Natural killer cell (primary cell): ENCODE measurements at regions of chr11 and their contacts with region 1.

Region 1: DNA sequence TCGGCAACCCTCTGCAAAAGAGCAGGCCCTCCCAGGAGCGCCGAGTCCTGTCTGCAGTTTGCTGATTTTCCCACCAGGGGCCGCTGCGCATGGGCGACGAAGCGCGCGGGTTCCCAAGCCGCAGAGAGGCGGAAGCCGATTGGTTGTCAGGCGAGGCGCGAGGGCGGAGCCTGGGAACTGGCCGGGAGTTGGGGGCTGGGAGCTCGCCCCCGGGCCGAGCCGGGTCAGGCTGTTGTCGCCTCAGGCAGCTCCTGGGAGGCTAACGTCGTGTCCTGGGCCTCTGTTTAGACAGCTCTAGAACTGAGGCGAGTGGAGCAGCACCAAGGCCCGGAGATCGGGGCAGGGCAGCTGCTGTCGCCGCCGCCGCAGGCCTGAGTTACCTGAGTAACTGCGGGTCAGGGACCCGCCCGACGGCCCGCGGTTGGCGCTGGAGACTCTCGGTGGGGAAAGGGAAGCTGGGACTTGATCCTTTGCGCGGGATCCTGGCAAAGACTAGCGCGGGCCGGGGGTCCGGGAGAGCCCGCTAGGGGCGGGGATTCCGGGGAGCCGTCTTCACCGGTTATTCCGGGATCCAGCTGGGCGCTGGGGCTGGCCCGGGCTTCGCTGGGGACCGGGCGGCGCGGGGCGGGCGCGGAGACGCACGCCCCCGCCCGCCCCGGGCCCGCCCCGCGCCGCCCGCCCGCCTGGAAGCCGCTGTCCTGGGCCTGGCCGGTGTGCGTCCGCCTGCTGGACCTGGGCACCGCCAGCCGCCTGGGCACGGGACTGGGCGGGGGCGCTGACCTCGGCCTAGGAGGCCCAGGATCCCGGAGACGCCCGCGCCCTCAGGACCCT is at the start of gene STIM1:
- DNase-seq: peak; percentile 98
- ATAC-seq: peak; percentile 77 to 92 (median 84)
- H3K4me3 ChIP-seq: peak within 1 kb of the TSS; percentile 96
- H3K4me3 Mint-ChIP-seq: peak within 1 kb of the TSS; percentile 96
- H3K27ac ChIP-seq: peak within 1 kb of the TSS; percentile 86
- H3K27ac Mint-ChIP-seq: peak within 1 kb of the TSS; percentile 83 to 100
- H3K4me1 ChIP-seq: peaks cover 49% of the 10 kb centered on the region
- H3K4me1 Mint-ChIP-seq: peaks cover 67 to 69% of the 10 kb centered on the region in 2 donors
- H3K27me3 ChIP-seq: no peaks in the 10 kb centered on the region
- H3K27me3 Mint-ChIP-seq: no peaks in the 10 kb centered on the region
- CTCF ChIP-seq: peak; percentile 94
- total RNA-seq, gene STIM1: 171 to 187 (median 175) TPM

Region 2: DNA sequence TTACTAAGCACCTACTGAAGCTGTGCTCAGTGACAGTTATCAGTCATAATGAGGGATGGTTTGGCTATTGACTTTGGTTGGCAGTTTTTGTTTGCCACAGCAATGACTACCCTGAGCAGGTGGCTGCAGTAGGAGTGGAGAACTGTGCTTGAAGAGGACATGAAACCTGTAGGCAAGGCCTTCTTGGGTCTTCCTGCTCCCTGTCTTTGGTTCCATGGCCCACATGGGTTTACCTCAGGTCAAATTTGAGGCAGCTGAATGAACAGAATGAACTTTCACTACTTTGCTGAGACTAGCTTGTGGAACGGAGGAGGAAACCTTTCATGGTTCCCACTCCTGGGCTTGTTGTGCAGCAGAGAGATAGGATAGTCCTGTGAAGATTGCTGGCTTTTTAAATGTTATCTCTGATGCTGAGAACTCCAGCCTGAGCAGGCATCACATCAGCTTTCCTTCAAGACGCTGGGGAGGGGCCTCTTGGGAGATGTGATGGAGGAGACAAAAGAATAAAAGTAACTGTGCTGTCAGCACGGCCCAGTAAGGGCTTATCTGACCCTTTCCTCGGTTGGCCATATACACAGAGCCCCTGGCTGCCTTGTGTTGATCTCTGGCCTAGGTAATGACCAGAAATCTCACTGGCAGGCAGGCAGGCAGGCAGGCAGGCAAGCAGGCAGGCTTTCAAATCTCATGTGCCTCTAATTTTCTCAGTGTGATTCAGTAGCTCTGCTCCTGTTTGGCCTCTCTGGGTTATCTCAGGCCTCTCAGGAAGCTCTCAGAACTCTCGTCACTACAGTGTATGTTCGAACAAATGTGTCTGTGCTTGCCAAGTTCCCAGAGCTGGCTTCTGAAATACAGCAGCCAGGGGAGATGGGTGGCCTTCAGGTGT is 12.3 kb after region 1 on chr11:
- intact Hi-C with region 1: loop called (anchors 1 kb)
- DNase-seq: peak in 1 of 2 donors; percentile 34
- ATAC-seq: no peak
- H3K4me3 ChIP-seq: no peak overlapping the region
- H3K4me3 Mint-ChIP-seq: peak overlapping the region; percentile 41
- H3K27ac ChIP-seq: peak overlapping the region; percentile 70
- H3K27ac Mint-ChIP-seq: peak overlapping the region; percentile 83 to 88
- H3K4me1 ChIP-seq: peaks cover 55% of the 10 kb centered on the region
- H3K4me1 Mint-ChIP-seq: peaks cover 79 to 82% of the 10 kb centered on the region in 2 donors
- H3K27me3 ChIP-seq: no peaks in the 10 kb centered on the region
- H3K27me3 Mint-ChIP-seq: no peaks in the 10 kb centered on the region
- CTCF ChIP-seq: no peak

Region 3: DNA sequence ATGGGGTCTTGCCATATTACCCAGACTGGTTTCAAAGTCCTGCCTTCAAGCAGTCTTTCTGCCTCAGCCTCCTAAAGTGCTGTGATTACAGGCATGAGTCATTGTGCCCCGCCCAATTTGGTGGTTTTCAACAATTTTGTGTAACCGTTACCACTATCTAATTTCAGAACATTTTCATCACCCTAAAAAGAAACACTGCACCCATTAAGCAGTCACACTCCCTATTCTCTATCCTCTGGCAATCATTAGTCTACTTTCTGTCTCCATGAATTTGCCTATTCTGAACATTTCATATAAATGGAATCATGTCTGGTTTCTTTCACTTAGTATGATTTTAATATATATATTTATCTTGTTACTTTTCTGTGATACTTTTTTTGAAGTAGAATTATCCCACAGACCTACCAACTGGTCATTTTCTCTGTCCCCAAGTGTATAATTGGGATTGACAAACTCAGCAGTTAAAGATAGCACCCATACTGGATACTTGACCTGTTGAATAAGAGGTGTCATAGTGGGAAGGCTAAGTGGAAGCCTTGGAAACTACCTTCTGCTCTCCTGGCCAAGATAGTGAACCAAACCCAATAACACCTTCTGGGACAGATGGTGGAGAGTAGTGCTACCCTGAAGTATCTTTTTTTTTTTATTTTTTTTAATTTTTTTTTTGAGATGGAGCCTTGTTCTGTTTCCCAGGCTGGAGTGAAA is 65.1 kb after region 1 on chr11:
- intact Hi-C with region 1: loop called (anchors 2 kb)
- DNase-seq: peak; percentile 57 to 76
- ATAC-seq: peak; percentile 78 to 79 (median 78)
- H3K4me3 ChIP-seq: no peak overlapping the region
- H3K4me3 Mint-ChIP-seq: peak overlapping the region; percentile 36
- H3K27ac ChIP-seq: peak overlapping the region; percentile 65
- H3K27ac Mint-ChIP-seq: peak overlapping the region; percentile 61 to 81
- H3K4me1 ChIP-seq: peaks cover 47% of the 10 kb centered on the region
- H3K4me1 Mint-ChIP-seq: peaks cover 57% of the 10 kb centered on the region in 2 donors
- H3K27me3 ChIP-seq: no peaks in the 10 kb centered on the region
- H3K27me3 Mint-ChIP-seq: no peaks in the 10 kb centered on the region
- CTCF ChIP-seq: no peak

Region 4: GRCh38 chr11:3994030-3994640 is 138.9 kb after region 1 on chr11:
- intact Hi-C with region 1: loop called (anchors 5 kb)
- DNase-seq: peak in 1 of 2 donors; percentile 23
- ATAC-seq: peak in 1 of 3 donors; percentile 49
- H3K4me3 ChIP-seq: no peak overlapping the region
- H3K4me3 Mint-ChIP-seq: no peak overlapping the region
- H3K27ac ChIP-seq: no peak overlapping the region
- H3K27ac Mint-ChIP-seq: no peak overlapping the region
- H3K4me1 ChIP-seq: peaks cover 15% of the 10 kb centered on the region
- H3K4me1 Mint-ChIP-seq: peaks cover 76 to 78% of the 10 kb centered on the region in 2 donors
- H3K27me3 ChIP-seq: no peaks in the 10 kb centered on the region
- H3K27me3 Mint-ChIP-seq: no peaks in the 10 kb centered on the region
- CTCF ChIP-seq: no peak

Region 5: GRCh38 chr11:4164884-4165590 is 309.8 kb after region 1 on chr11:
- intact Hi-C with region 1: no loop called
- DNase-seq: no peak
- ATAC-seq: no peak
- H3K4me3 ChIP-seq: no peak overlapping the region
- H3K4me3 Mint-ChIP-seq: no peak overlapping the region
- H3K27ac ChIP-seq: no peak overlapping the region
- H3K27ac Mint-ChIP-seq: no peak overlapping the region
- H3K4me1 ChIP-seq: no peaks in the 10 kb centered on the region
- H3K4me1 Mint-ChIP-seq: no peaks in the 10 kb centered on the region
- H3K27me3 ChIP-seq: no peaks in the 10 kb centered on the region
- H3K27me3 Mint-ChIP-seq: peaks cover 8 to 10% of the 10 kb centered on the region in 2 donors
- CTCF ChIP-seq: no peak